Activated B cell treated with CpG ODN at 0.5 μM for 24 hours (primary cell): ENCODE measurements at regions of chr6 and their contacts with region 1.

Region 1: GRCh38 chr6:104682722-104683643 is 176.7 kb downstream of the HACE1 start:
- DNase-seq: no peak
- ATAC-seq: no peak
- H3K4me3 Mint-ChIP-seq: no peak overlapping the region
- H3K27ac Mint-ChIP-seq: no peak overlapping the region
- H3K4me1 Mint-ChIP-seq: no peaks in the 10 kb centered on the region
- H3K27me3 Mint-ChIP-seq: peaks cover 1% of the 10 kb centered on the region
- CTCF ChIP-seq: no peak

Region 2: DNA sequence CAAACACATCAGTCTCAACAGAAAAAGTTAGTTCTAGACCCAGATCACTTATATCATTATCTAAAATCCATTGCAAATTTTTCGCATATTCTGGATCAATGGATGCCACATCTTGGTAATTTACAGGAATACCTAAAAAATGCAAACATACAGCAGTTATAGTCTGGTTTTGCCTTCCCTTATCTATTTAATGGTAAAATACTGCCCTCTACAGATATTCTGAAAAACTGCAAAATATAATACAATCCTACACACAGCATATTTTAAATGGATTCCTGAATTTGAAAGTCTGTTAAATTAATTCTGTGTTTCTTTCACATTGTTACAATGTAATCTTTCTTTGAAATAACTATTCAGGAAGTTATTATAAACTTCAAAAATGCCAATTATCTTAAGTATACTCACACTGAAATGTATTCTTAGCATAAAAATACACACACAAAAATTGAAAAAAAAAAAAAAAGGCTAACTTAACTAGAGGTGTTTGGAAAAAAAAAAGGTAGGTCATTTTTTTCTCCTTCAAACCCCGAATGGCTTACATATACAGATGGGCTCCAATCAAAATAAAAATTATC is 88.4 kb after region 1 on chr6:
- CTCF ChIA-PET with region 1: interaction called, 4 read pairs
- POLR2A ChIA-PET with region 1: no interaction called
- intact Hi-C with region 1: loop called (anchors 1 kb)
- DNase-seq: no peak
- ATAC-seq: no peak
- H3K4me3 Mint-ChIP-seq: no peak overlapping the region
- H3K27ac Mint-ChIP-seq: no peak overlapping the region
- H3K4me1 Mint-ChIP-seq: no peaks in the 10 kb centered on the region
- H3K27me3 Mint-ChIP-seq: no peaks in the 10 kb centered on the region
- CTCF ChIP-seq: no peak